ENCODE measurements at regions of chr17 and their contacts with region 1.

Region 1: GRCh38 chr17:46044286-46044928 is 45.4 kb downstream of the STH start:
- DNase-seq: no peak
- ATAC-seq: peak; percentile 91
- H3K4me3 ChIP-seq: no peak overlapping the region
- H3K27ac ChIP-seq: peak overlapping the region; percentile 19
- H3K4me1 ChIP-seq: peaks cover 43% of the 10 kb centered on the region
- H3K27me3 ChIP-seq: no peaks in the 10 kb centered on the region
- CTCF ChIP-seq: peak; percentile 82

Region 2: DNA sequence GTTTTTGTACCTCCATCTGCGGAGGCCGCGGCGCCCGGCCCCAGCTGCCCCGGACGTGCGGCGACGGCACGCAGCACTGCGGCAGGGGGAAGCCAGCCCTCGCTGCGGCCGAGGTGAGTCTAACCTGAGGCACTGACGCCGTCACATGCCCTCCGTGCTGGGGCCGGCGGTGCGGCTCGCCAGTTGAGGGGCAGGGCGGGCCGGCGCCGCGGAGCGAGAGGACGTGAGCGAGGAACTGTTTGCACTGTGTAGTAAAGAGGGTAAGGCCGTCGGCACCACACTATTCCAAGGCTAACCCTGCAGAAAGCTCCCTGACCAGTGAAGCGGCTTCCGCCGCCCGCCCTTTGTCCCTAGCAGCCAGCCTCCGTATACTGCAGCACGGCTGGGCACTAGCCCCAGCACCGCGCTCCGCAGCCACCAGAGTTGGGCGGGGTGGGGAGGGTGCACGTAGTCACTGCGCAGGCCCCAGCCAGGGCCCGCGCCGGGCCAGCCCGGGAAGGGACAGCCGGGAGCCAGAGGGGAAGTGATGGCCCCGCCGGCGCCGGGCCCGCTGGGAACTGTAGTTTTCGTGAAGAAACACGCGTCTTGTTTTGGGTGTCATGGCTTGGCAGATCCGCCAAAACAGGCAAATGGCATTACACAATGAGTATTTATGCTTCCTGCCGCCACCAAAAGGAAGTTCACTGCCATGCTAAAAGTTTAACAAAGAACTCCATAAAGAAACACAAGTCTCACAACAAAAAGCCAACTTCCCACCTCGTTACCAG is 149.4 kb after region 1 on chr17:
- intact Hi-C with region 1: loop called (anchors 10 kb)
- DNase-seq: peak; percentile 97
- ATAC-seq: peak; percentile 92 to 98
- H3K4me3 ChIP-seq: peak overlapping the region; percentile 83
- H3K27ac ChIP-seq: peak overlapping the region; percentile 97
- H3K4me1 ChIP-seq: peaks cover 39% of the 10 kb centered on the region
- H3K27me3 ChIP-seq: no peaks in the 10 kb centered on the region
- CTCF ChIP-seq: no peak

Measured in lower lobe of right lung (tissue), 2 donors.